GM10248 (cell line): ENCODE measurements at regions of chr11 and their contacts with region 1.

Region 1: GRCh38 chr11:111882202-111882601 is 2.9 kb downstream of the CFAP68 start:
- DNase-seq: no peak
- CTCF ChIP-seq: no peak

Region 2: DNA sequence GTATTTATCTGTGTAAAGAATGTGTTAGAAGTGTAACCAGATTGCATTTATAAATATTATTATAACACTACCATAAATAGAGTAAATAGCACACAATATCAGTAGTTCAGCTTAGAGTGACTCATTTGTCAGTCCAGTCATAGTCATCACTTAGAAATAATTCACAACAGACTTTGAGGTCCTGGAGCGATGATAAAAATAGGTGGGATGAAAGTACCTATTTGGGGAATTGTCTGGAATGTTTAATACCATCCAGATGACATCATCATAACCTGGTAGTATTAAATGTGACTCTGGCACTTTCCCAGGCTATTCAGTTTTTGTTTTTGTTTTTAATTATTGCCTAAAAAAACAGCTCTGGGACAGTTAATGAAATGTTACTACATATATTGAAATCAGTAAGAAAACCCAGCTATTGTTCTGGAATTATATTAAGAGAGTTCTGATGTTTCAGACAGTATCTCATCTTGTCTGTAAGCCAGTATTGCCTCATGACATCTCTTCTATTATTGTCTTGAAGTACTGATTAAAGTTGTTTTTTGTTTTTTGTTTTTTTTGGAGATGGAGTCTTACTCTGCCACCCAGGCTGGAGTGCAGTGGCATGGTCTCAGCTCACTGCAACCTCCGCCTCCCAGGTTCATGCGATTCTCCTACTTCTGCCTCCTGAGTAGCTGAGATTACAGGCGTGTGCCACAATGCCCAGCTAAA is 205.2 kb before region 1 on chr11:
- CTCF ChIA-PET with region 1: no interaction called
- POLR2A ChIA-PET with region 1: no interaction called
- DNase-seq: no peak
- CTCF ChIP-seq: no peak

Region 3: GRCh38 chr11:111870886-111871692 is 11.1 kb before region 1 on chr11 and contains the start of gene ALG9:
- CTCF ChIA-PET with region 1: interaction called, 19 read pairs
- POLR2A ChIA-PET with region 1: no interaction called
- DNase-seq: peak; percentile 87
- CTCF ChIP-seq: no peak